ENCODE measurements at regions of chr12 and their contacts with region 1.

Region 1: DNA sequence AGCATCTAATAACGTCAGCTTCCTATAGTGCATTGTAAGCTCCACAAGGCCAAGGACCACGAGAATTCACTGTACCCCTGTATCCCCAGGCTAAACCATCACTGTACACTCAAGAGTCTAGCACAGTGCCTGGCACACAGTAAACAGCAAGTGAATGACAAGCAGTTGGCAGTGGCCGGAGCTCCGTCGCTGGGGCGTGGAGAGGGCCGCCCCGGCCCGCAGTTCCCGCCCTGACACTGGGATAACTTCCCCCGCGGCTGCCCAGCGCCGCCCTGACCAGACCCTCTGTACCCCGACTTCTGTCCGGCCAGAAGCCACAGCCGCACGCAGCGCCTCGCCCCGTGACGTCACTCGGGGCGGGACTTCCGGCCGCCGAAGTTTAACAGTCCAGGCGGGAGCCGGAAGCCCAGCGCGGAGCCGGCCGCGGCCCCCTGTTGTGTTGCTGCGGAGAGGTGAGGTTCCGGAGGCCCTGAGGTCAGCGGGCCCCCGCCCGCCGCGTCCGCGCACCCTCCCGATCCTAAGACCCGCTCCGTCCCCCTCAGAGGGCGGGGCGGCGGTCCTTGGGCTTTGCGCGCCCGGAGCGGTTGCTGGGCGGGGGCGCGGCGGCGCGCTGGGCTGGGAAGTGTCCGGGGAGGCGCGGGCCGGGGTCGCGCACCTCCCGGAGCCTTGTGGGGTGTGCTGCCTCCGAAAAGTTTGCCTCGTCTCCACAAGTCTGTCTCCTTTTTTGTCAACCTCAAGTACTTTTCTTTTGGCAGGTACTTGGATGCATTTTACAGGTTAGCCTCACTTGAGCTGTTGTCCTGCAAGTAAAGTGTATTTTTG is at the start of gene NEDD1:
- DNase-seq: peak; percentile 80
- H3K4me3 Mint-ChIP-seq: peak within 1 kb of the TSS; percentile 95
- H3K27ac Mint-ChIP-seq: peak within 1 kb of the TSS; percentile 96
- H3K4me1 Mint-ChIP-seq: peaks cover 44% of the 10 kb centered on the region
- H3K27me3 Mint-ChIP-seq: peaks cover 10% of the 10 kb centered on the region
- total RNA-seq, gene NEDD1: 53.7 and 54.2 TPM in 2 replicates

Region 2: GRCh38 chr12:95942524-95943329 is 964.3 kb before region 1 on chr12 and contains the start of gene CCDC38:
- intact Hi-C with region 1: loop called (anchors 2 kb)
- DNase-seq: peak; percentile 77
- H3K4me3 Mint-ChIP-seq: peak within 1 kb of the TSS; percentile 82
- H3K27ac Mint-ChIP-seq: peak within 1 kb of the TSS; percentile 76
- H3K4me1 Mint-ChIP-seq: peaks cover 5% of the 10 kb centered on the region
- H3K27me3 Mint-ChIP-seq: peaks cover 18% of the 10 kb centered on the region
- total RNA-seq, gene CCDC38: 0.07 TPM in 1 of 2 replicates, not detected in the other

Region 3: GRCh38 chr12:96919510-96920210 is 12.6 kb after region 1 on chr12:
- intact Hi-C with region 1: loop called (anchors 1 kb)
- DNase-seq: no peak
- H3K4me3 Mint-ChIP-seq: no peak overlapping the region
- H3K27ac Mint-ChIP-seq: no peak overlapping the region
- H3K4me1 Mint-ChIP-seq: peaks cover 24% of the 10 kb centered on the region
- H3K27me3 Mint-ChIP-seq: no peaks in the 10 kb centered on the region

Region 4: DNA sequence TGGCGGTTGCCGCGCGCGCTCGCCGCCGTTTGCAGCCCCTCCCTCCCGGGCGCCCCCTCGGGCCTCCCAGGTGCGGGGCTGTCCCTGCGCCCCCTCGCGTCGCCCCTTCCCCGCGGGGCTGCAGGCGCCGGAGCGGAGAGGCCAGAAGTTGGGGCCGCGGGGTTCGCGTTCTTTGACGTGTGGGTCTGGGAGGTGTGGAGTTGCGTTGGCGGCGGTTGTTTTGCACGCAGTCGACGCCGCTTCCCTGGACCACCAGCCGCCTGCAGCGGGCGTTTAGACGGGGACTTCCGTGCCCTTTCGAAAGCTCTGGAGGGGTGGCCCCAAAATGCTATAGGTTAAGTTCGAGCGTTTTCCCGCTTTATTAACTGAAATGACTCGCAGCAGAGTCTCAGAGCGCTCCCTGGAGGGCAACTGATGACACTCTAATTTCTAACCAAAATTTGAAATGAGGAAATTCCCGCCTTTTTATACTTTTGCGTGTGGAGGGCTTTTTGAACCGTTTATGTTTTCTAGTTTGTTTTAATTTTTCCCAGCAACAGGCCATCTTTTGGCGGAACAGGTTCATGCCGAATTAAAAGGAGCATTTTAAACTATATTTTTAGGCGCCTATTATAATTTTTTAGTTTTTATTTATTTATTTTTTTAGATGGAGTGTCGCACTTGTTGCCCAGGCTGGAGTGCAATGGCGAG is 1609.3 kb after region 1 on chr12:
- intact Hi-C with region 1: loop called (anchors 10 kb)
- DNase-seq: peak; percentile 83
- H3K4me3 Mint-ChIP-seq: peak overlapping the region; percentile 92
- H3K27ac Mint-ChIP-seq: peak overlapping the region; percentile 98
- H3K4me1 Mint-ChIP-seq: peaks cover 22% of the 10 kb centered on the region
- H3K27me3 Mint-ChIP-seq: no peaks in the 10 kb centered on the region

Measured in activated T-helper 2 cell treated with anti-CD3 and anti-CD28 coated beads, Interferon-gamma antibody, Interleukin-2, Interleukin-4, amounts not matched to agents 10 μg/mL and 5 μg/mL and 100 μg/mL, durations not matched to agents 14 hours and 24 hours and 36 hours (primary cell).